A673 (cell line): ENCODE measurements at regions of chr2 and their contacts with region 1.

Region 1: DNA sequence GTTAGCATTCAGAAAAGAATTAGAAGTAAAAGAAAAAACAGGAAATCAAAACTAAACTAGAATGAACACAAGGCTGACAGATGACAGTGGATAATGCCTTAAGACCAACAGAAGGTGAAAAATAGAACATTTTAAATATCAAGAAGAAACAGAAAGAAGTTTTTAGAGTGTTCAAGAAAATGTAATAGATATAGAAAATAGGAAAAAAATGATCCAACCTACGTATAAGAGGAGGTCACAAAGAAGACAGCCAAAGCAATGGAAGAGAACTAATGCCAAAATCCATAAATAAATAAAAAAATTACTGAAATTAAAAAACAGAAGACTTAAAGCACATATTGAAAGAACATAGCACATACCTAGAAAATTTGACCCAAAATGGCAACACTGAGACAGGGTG is 42.5 kb upstream of the EN1 start:
- DNase-seq: no peak
- H3K4me3 ChIP-seq: no peak overlapping the region
- H3K27ac ChIP-seq: no peak overlapping the region
- H3K4me1 ChIP-seq: no peaks in the 10 kb centered on the region
- H3K27me3 ChIP-seq: no peaks in the 10 kb centered on the region
- CTCF ChIP-seq: no peak

Region 2: DNA sequence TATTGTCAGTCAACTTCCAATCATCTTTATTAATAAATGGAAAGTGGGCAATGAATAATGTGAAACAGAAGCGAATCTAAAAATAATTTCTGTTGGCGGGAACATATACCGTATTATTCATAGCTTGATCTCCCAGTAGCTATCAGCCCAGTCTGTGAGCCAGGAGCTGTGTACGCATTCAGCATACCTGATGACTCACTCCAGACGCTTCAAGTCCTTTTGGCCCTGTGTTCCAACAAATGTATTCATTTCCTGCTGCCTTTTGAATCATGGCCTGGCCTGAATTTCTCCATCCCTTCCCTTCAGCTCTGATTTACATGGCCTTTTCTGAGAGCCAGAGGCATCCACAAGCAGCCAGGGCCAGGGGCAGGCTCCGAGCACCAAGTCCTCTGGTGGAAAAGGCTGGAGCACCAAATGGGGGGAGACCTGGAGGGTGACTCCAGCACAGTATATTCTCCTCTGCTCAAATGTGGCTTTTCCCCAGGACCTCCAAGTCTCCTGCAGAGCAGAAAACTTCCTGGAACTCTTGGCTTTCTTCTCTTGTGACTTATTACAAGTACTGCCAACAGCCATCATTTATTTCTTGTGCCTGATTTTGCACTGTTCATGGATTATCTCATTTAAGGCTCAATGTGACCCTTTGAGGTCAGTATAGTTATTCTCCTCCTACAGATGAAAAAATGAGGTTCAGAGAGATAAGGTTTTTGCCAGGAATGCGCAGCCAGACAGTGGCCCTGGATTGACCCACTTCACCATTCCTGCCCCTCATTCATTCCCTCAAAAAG is 151.3 kb before region 1 on chr2:
- CTCF ChIA-PET with region 1: no interaction called
- POLR2A ChIA-PET with region 1: no interaction called
- intact Hi-C with region 1: no loop called
- DNase-seq: peak; percentile 8
- H3K4me3 ChIP-seq: no peak overlapping the region
- H3K27ac ChIP-seq: no peak overlapping the region
- H3K4me1 ChIP-seq: no peaks in the 10 kb centered on the region
- H3K27me3 ChIP-seq: no peaks in the 10 kb centered on the region
- CTCF ChIP-seq: no peak

Region 3: GRCh38 chr2:118834901-118835745 is 54.9 kb before region 1 on chr2:
- CTCF ChIA-PET with region 1: no interaction called
- POLR2A ChIA-PET with region 1: no interaction called
- intact Hi-C with region 1: no loop called
- DNase-seq: no peak
- H3K4me3 ChIP-seq: peak overlapping the region; percentile 39
- H3K27ac ChIP-seq: no peak overlapping the region
- H3K4me1 ChIP-seq: no peaks in the 10 kb centered on the region
- H3K27me3 ChIP-seq: peaks cover 74% of the 10 kb centered on the region
- CTCF ChIP-seq: no peak

Region 4: GRCh38 chr2:119111115-119112017 is 221.4 kb after region 1 on chr2:
- CTCF ChIA-PET with region 1: no interaction called
- POLR2A ChIA-PET with region 1: no interaction called
- intact Hi-C with region 1: loop called (anchors 10 kb)
- DNase-seq: no peak
- H3K4me3 ChIP-seq: no peak overlapping the region
- H3K27ac ChIP-seq: no peak overlapping the region
- H3K4me1 ChIP-seq: no peaks in the 10 kb centered on the region
- H3K27me3 ChIP-seq: peaks cover 11% of the 10 kb centered on the region
- CTCF ChIP-seq: no peak

Region 5: GRCh38 chr2:119240311-119241202 is 350.6 kb after region 1 on chr2:
- CTCF ChIA-PET with region 1: no interaction called
- POLR2A ChIA-PET with region 1: no interaction called
- intact Hi-C with region 1: no loop called
- DNase-seq: peak; percentile 33
- H3K4me3 ChIP-seq: no peak overlapping the region
- H3K27ac ChIP-seq: no peak overlapping the region
- H3K4me1 ChIP-seq: peaks cover 10% of the 10 kb centered on the region
- H3K27me3 ChIP-seq: no peaks in the 10 kb centered on the region
- CTCF ChIP-seq: no peak

Region 6: GRCh38 chr2:119315241-119315927 is 425.4 kb after region 1 on chr2:
- CTCF ChIA-PET with region 1: no interaction called
- POLR2A ChIA-PET with region 1: no interaction called
- intact Hi-C with region 1: no loop called
- DNase-seq: no peak
- H3K4me3 ChIP-seq: no peak overlapping the region
- H3K27ac ChIP-seq: no peak overlapping the region
- H3K4me1 ChIP-seq: peaks cover 8% of the 10 kb centered on the region
- H3K27me3 ChIP-seq: no peaks in the 10 kb centered on the region
- CTCF ChIP-seq: no peak